Calu3 (cell line): ENCODE measurements at regions of chr3 and their contacts with region 1.

Region 1: GRCh38 chr3:138974462-138974861 is 27.4 kb downstream of the FOXL2NB start:
- DNase-seq: peak; percentile 75
- H3K4me3 Mint-ChIP-seq: no peak overlapping the region
- H3K27ac Mint-ChIP-seq: peak overlapping the region; percentile 12
- H3K4me1 Mint-ChIP-seq: peaks cover 21% of the 10 kb centered on the region
- H3K27me3 Mint-ChIP-seq: no peaks in the 10 kb centered on the region
- CTCF ChIP-seq: no peak

Region 2: DNA sequence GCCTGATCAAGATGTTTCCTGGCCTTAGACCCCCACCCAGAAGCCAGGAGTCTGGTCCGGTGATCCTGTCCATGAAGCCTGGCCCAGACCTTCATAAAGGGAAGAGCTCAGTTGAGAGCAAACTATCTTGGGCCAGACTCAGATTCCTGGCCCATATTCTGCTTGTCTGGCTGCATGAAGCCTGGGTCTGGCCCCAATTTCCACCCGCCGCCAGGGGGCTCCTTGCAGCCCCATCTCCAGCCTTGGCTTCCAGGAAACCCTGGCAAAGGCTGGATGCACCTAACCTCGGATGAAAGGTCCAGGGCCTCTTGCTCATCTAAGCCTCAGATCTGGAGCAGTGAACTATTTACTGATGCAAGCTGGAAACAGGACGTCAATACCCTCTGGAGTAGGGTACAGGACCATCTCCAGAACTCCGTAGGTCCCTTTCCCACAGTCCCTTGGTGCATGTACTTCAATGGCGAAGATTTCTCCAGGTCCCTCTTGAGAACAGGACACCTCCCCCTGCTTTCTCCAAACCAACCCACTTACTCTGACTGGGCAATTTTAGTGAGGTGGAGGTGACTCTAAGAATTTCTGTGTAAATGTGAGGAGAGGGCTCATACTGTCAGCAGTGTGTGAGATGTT is 33.1 kb before region 1 on chr3:
- CTCF ChIA-PET with region 1: interaction called, 50 read pairs
- intact Hi-C with region 1: loop called (anchors 1 kb)
- DNase-seq: peak; percentile 91
- H3K4me3 Mint-ChIP-seq: no peak overlapping the region
- H3K27ac Mint-ChIP-seq: no peak overlapping the region
- H3K4me1 Mint-ChIP-seq: peaks cover 31% of the 10 kb centered on the region
- H3K27me3 Mint-ChIP-seq: peaks cover 94% of the 10 kb centered on the region
- CTCF ChIP-seq: peak; percentile 93

Region 3: GRCh38 chr3:138946181-138947059 is 28.0 kb before region 1 on chr3:
- CTCF ChIA-PET with region 1: interaction called, 11 read pairs
- intact Hi-C with region 1: loop called (anchors 1 kb)
- DNase-seq: peak; percentile 86
- H3K4me3 Mint-ChIP-seq: peak overlapping the region; percentile 66
- H3K27ac Mint-ChIP-seq: no peak overlapping the region
- H3K4me1 Mint-ChIP-seq: peaks cover 25% of the 10 kb centered on the region
- H3K27me3 Mint-ChIP-seq: peaks cover 93% of the 10 kb centered on the region
- CTCF ChIP-seq: peak; percentile 32